Astrocyte of the cerebellum (primary cell): ENCODE measurements at regions of chrX and their contacts with region 1.

Region 1: DNA sequence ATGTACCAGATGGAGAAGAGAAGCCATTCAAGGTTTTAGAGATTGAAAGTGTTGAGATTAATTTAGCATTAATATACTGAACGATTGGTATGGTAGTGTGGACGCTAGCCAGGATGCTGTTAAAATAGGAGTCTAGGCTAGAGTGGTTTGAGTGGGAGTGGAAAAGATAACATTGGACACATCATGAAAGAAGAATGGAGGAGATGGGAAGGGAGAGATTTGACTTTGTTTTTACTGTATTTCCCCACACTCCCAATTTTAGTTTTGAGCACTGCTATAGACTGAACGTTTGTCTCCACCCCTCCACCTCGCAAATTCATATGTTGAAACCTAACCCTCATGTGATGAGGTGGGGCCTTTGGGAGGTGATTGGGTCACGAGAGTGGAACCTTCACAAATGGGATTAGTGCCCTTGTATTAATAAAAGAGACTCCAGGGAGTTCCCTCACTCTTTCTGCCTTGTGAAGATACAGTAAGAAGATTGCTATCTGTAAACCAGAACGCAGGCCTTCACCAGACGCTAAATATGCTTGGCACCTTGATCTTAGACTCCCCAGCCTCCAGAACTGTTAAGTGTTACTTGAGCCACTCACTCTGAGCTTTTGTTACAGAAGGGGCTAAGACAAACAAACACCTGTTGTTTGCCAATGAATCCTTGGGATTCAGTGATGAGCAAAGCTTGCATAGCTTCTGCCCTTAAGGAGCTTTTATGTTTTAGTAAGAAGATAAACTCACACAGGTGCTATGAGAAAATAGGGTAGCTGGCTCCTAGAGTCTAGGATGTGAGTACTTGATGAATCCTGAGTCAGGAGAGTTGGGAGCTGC is 25.8 kb downstream of the USP9X start:
- DNase-seq: no peak
- H3K4me3 ChIP-seq: no peak overlapping the region
- CTCF ChIP-seq: no peak

Region 2: GRCh38 chrX:41043674-41044345 is 67.2 kb before region 1 on chrX:
- in situ Hi-C with region 1: loop called (anchors 5 kb)
- DNase-seq: no peak
- H3K4me3 ChIP-seq: no peak overlapping the region
- CTCF ChIP-seq: no peak

Region 3: GRCh38 chrX:42189576-42189975 is 1078.6 kb after region 1 on chrX:
- in situ Hi-C with region 1: no loop called
- DNase-seq: peak; percentile 12
- H3K4me3 ChIP-seq: no peak overlapping the region
- CTCF ChIP-seq: no peak